Kidney (tissue), 22 donors: ENCODE measurements at regions of chr13 and their contacts with region 1.

Region 1: GRCh38 chr13:107205303-107206104 is 637.6 kb upstream of the ARGLU1 start:
- DNase-seq: peak; percentile 71 to 79 (median 76)
- H3K4me3 ChIP-seq: no peak overlapping the region
- H3K27ac ChIP-seq: no peak overlapping the region
- H3K4me1 ChIP-seq: peaks cover 0 to 3% (median 2%) of the 10 kb centered on the region in 3 donors
- H3K27me3 ChIP-seq: no peaks in the 10 kb centered on the region
- CTCF ChIP-seq: peak; percentile 89

Region 2: GRCh38 chr13:106981051-106981450 is 224.5 kb before region 1 on chr13:
- intact Hi-C with region 1: no loop called
- DNase-seq: no peak
- H3K4me3 ChIP-seq: no peak overlapping the region
- H3K27ac ChIP-seq: no peak overlapping the region
- H3K4me1 ChIP-seq: no peaks in the 10 kb centered on the region
- H3K27me3 ChIP-seq: no peaks in the 10 kb centered on the region
- CTCF ChIP-seq: no peak

Region 3: GRCh38 chr13:107296804-107297203 is 91.3 kb after region 1 on chr13:
- intact Hi-C with region 1: no loop called
- DNase-seq: no peak
- H3K4me3 ChIP-seq: no peak overlapping the region
- H3K27ac ChIP-seq: no peak overlapping the region
- H3K4me1 ChIP-seq: no peaks in the 10 kb centered on the region
- H3K27me3 ChIP-seq: no peaks in the 10 kb centered on the region
- CTCF ChIP-seq: no peak

Region 4: DNA sequence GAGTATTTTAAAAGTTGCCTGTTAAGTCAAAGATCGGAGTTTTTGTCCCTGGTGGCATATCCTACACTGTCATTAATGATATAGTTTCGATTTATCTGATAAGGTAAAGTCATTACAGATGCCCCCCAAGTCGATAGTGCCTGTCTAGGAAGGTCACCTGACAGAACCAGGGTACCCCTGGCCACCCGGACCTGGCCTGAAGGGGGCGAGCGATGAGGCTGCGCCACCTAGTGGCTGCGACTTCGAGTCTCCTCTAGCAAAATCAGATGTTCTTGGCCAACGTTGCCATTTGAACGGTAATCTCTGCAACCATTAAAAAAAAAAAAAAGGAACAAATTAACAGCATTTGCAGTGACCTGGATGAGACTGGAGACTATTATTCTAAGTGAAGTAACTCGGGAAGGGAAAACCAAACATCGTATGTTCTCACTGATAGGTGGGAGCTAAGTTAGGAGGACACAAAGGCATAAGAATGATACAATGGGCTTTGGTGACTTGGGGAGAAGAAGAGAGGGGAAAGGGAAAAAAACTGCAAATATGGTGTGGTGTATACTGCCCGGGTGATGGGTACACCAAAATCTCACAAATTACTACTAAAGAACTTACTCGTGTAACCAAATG is 444.7 kb after region 1 on chr13:
- intact Hi-C with region 1: loop called (anchors 5 kb)
- DNase-seq: peak; percentile 43 to 71 (median 59)
- H3K4me3 ChIP-seq: no peak overlapping the region
- H3K27ac ChIP-seq: no peak overlapping the region
- H3K4me1 ChIP-seq: no peaks in the 10 kb centered on the region
- H3K27me3 ChIP-seq: no peaks in the 10 kb centered on the region
- CTCF ChIP-seq: peak; percentile 59

Region 5: DNA sequence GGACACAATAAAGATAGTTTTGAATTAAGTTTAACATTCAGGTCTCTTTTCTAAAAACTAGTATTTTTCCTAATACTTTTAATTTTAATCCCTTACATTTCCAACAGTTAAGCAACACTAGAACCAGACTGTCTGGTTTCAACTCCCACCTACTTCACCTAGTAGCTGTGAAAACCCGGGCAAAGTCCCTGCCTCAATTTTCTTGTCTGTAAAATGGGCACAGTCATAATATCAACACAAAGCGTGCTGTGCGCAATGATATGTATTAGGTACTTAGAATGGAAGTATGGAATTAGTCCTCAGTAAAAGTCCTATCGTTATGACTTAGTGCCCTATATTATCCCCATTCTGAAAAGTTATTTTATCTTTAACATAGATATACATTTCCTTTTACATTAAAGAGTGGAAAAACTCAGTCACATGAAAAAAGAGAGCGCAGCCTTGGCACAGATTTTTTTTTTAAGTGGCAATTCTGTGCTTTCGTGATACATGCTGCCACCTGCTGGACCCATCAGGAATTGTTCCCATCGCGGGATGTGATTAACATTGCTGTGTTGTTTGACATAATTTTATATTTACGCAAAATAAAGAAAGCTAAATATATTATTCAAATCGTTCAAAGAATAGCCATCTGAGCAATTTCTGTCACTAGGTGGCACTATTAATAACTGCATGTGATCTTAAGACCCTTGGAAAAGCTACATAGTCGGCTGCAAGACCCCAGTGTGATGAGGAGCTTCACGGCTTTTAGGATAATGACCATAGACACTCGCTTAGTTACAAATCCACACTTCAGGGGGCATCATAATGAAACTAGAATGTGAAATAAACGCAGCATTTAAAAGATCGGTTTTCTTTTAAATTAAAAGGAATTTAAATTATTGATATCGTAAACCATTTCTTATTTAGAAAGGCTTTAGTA is 949.9 kb after region 1 on chr13:
- intact Hi-C with region 1: loop called (anchors 10 kb)
- DNase-seq: peak in 4 of 5 donors; percentile 33 to 66 (median 58)
- H3K4me3 ChIP-seq: no peak overlapping the region
- H3K27ac ChIP-seq: no peak overlapping the region
- H3K4me1 ChIP-seq: no peaks in the 10 kb centered on the region
- H3K27me3 ChIP-seq: no peaks in the 10 kb centered on the region
- CTCF ChIP-seq: peak; percentile 67